ENCODE measurements at regions of chr3 and their contacts with region 1.

Region 1: GRCh38 chr3:161104561-161105551 is at the start of gene B3GALNT1:
- DNase-seq: peak in 1 of 2 donors; percentile 65
- H3K4me3 ChIP-seq: peak within 1 kb of the TSS; percentile 64 to 71
- H3K27ac ChIP-seq: peak within 1 kb of the TSS; percentile 70 to 78
- H3K4me1 ChIP-seq: peaks cover 0 to 8% of the 10 kb centered on the region in 2 donors
- H3K27me3 ChIP-seq: no peaks in the 10 kb centered on the region
- CTCF ChIP-seq: peak in 1 of 3 experiments; percentile 4
- total RNA-seq, gene B3GALNT1: 55.6 TPM

Region 2: DNA sequence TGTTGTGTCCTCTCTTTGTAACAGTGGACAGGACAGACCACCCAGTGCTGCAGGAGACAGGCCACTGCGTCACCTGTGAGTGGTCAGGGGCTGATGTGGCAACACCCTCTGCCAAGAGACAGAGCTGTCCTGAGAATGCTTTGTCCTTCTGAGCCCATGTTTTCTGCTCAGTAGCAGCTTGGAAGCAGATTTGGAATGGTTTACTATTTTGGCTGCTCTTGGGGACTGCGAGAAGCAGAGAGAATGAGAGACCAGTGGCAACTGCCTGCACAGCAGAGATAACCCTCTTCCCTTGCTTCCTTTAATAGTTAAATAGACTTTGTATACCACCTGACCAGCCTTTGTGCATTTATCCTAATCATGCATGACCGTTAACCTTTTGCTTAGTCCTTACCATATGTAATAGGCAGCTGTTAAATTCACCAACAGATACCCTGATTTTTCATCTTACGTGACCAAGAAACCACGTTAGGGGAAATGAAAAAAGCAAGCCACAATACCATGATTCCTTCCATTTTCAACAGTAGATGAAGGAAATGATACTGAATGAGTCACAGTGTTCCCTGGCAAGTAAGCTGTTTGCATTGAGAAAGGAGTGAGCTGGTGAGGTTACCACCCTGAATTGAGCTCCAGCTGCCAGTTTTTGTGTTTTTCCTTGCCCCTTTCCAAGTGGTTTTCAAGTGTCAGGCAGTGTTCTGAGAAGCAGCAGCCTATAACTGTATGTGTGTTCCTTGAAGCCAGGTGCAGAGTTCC is 35.2 kb before region 1 on chr3:
- intact Hi-C with region 1: loop called (anchors 2 kb)
- DNase-seq: peak; percentile 11 to 68
- H3K4me3 ChIP-seq: no peak overlapping the region
- H3K27ac ChIP-seq: peak overlapping the region; percentile 61 to 76
- H3K4me1 ChIP-seq: peaks cover 6 to 16% of the 10 kb centered on the region in 2 donors
- H3K27me3 ChIP-seq: no peaks in the 10 kb centered on the region
- CTCF ChIP-seq: no peak

Measured in ascending aorta (tissue), 2 donors.